ENCODE measurements at regions of chr19 and their contacts with region 1.

Region 1: GRCh38 chr19:33778089-33778791 is 18.4 kb upstream of the KCTD15 start:
- DNase-seq: no peak
- ATAC-seq: peak; percentile 93
- H3K4me3 ChIP-seq: no peak overlapping the region
- H3K27ac ChIP-seq: no peak overlapping the region
- H3K4me1 ChIP-seq: peaks cover 0 to 4% of the 10 kb centered on the region in 2 experiments; a peak in 1 of 4 replicates
- H3K27me3 ChIP-seq: no peaks in the 10 kb centered on the region
- CTCF ChIP-seq: peak; percentile 100
- POLR2A ChIP-seq: no peak
- RAD21 ChIP-seq: peak; percentile 99

Region 2: DNA sequence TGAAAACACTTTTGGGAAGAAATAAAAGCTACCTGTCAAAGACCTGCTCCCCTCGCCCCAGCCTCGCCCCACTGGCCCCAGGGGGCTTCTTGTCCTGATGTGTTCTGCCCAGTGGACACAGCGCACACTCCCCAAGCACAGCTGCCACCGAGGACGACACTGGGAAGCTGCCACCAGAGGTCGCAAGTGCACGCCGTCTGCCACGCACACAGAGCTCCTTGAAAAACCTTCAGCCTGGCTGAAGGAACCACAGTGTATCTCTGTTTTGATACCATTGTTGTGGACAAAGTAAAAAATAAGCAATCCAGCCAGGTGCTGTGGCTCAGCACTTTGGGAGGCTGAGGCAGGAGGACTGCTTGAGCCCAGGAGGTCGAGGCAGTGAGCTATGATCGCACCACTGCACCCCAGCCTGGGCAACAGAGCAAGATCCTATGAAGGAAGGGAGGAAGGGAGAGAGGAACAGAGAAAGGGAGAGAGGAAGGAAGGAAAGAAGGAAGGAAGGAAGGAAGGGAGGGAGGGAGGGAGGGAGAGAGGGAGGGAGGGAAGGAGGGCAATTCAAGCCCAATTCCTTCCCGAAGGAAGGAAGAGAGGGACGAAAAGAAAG is 347.5 kb before region 1 on chr19:
- CTCF ChIA-PET with region 1: interaction called, 12 read pairs
- POLR2A ChIA-PET with region 1: no interaction called
- RAD21 ChIA-PET with region 1: no interaction called
- intact Hi-C with region 1: no loop called
- DNase-seq: peak; percentile 22
- ATAC-seq: peak; percentile 98
- H3K4me3 ChIP-seq: no peak overlapping the region
- H3K27ac ChIP-seq: no peak overlapping the region
- H3K4me1 ChIP-seq: no peaks in the 10 kb centered on the region
- H3K27me3 ChIP-seq: no peaks in the 10 kb centered on the region
- CTCF ChIP-seq: peak; percentile 56 to 95 (median 91); a peak in 5 of 6 replicates
- POLR2A ChIP-seq: no peak
- RAD21 ChIP-seq: peak; percentile 78

Region 3: GRCh38 chr19:33621811-33622504 is 156.3 kb before region 1 on chr19 and contains the start of gene CHST8:
- CTCF ChIA-PET with region 1: no interaction called
- POLR2A ChIA-PET with region 1: no interaction called
- RAD21 ChIA-PET with region 1: no interaction called
- intact Hi-C with region 1: no loop called
- DNase-seq: no peak
- ATAC-seq: no peak
- H3K4me3 ChIP-seq: no peak within 1 kb of the TSS
- H3K27ac ChIP-seq: no peak within 1 kb of the TSS
- H3K4me1 ChIP-seq: no peaks in the 10 kb centered on the region
- H3K27me3 ChIP-seq: peaks cover 21% of the 10 kb centered on the region; the same call in 1 of the 2 replicates
- CTCF ChIP-seq: no peak
- POLR2A ChIP-seq: no peak
- RAD21 ChIP-seq: no peak
- total RNA-seq, gene CHST8: not detected

Region 4: GRCh38 chr19:33998739-33999345 is 220.6 kb after region 1 on chr19:
- CTCF ChIA-PET with region 1: interaction called, 42 read pairs
- POLR2A ChIA-PET with region 1: no interaction called
- RAD21 ChIA-PET with region 1: interaction called, 3 to 10 read pairs
- intact Hi-C with region 1: loop called (anchors 1 kb)
- DNase-seq: no peak
- ATAC-seq: no peak
- H3K4me3 ChIP-seq: no peak overlapping the region
- H3K27ac ChIP-seq: no peak overlapping the region
- H3K4me1 ChIP-seq: no peaks in the 10 kb centered on the region
- H3K27me3 ChIP-seq: no peaks in the 10 kb centered on the region
- CTCF ChIP-seq: peak; percentile 33 to 79 (median 53); a peak in 4 of 6 replicates
- POLR2A ChIP-seq: no peak
- RAD21 ChIP-seq: peak; percentile 43

Region 5: DNA sequence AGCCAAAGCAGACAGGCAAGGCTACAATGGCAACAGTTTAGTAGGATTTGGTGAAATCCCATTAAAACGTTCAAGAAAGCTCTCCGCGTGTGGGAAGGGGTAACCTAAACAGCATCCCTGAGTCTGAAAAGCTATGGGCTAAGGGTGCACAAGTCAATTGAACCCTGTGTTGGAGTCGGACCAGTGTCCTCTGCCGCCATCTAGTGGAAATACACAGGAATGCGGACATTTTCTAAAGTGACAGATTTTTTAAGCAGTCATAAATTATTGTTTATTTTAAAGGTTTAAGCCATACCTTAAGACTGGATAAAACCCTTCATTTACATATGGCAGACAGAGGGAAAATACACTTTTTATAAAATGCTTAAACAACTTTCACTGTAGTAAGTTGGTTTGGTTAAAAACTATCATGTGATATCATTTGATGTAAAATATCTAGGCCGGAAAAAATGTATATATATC is 367.5 kb after region 1 on chr19:
- CTCF ChIA-PET with region 1: interaction called, 41 read pairs
- POLR2A ChIA-PET with region 1: interaction called, 3 read pairs
- RAD21 ChIA-PET with region 1: no interaction called
- intact Hi-C with region 1: loop called (anchors 1 kb)
- DNase-seq: peak; percentile 33
- ATAC-seq: peak; percentile 83
- H3K4me3 ChIP-seq: no peak overlapping the region
- H3K27ac ChIP-seq: no peak overlapping the region
- H3K4me1 ChIP-seq: no peaks in the 10 kb centered on the region
- H3K27me3 ChIP-seq: no peaks in the 10 kb centered on the region
- CTCF ChIP-seq: peak; percentile 67 to 88 (median 84)
- POLR2A ChIP-seq: no peak
- RAD21 ChIP-seq: peak; percentile 80

Region 6: GRCh38 chr19:34712395-34713261 is 934.4 kb after region 1 on chr19:
- CTCF ChIA-PET with region 1: interaction called, 11 read pairs
- POLR2A ChIA-PET with region 1: no interaction called
- RAD21 ChIA-PET with region 1: no interaction called
- intact Hi-C with region 1: loop called (anchors 5 kb)
- DNase-seq: peak; percentile 71
- ATAC-seq: peak; percentile 94
- H3K4me3 ChIP-seq: no peak overlapping the region
- H3K27ac ChIP-seq: no peak overlapping the region
- H3K4me1 ChIP-seq: no peaks in the 10 kb centered on the region
- H3K27me3 ChIP-seq: no peaks in the 10 kb centered on the region
- CTCF ChIP-seq: peak; percentile 50 to 83 (median 79)
- POLR2A ChIP-seq: no peak
- RAD21 ChIP-seq: peak; percentile 89

Measured in HCT116 (cell line).